PC-3 (cell line): ENCODE measurements at regions of chr14 and their contacts with region 1.

Region 1: DNA sequence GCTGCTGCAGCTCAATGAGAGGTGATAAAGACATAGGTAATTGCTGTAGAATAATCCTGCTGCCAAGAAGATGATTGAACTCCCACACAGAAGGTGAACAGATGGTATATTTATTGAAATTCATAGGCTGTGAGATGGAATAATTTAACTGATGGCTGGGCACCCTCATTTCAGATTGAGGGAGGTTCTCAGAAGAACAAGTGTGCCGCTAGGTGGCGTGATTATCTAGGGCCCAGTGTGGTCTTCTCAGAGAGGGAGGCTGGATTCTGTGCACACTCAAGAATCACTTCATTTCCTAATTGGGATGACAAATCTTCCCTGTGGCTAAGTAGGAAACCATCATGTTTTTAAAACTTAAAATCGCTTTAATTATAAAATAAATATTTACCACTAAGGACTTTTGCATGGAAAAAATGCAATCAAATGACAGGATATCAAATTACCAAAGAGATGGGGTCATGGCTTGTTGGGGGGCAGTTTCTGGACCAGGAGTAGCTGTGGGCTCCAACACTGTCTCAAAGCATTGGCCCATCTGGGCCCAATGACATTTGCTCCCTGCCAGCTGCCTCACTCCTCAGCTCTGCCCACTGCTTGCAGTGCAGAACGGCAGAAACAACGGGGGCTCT is 132.3 kb downstream of the SNAPC1 start:
- DNase-seq: peak; percentile 90
- ATAC-seq: peak; percentile 68
- H3K4me3 ChIP-seq: no peak overlapping the region
- H3K27ac ChIP-seq: no peak overlapping the region
- H3K4me1 ChIP-seq: peaks cover 21% of the 10 kb centered on the region
- H3K27me3 ChIP-seq: no peaks in the 10 kb centered on the region
- CTCF ChIP-seq: peak; percentile 96

Region 2: DNA sequence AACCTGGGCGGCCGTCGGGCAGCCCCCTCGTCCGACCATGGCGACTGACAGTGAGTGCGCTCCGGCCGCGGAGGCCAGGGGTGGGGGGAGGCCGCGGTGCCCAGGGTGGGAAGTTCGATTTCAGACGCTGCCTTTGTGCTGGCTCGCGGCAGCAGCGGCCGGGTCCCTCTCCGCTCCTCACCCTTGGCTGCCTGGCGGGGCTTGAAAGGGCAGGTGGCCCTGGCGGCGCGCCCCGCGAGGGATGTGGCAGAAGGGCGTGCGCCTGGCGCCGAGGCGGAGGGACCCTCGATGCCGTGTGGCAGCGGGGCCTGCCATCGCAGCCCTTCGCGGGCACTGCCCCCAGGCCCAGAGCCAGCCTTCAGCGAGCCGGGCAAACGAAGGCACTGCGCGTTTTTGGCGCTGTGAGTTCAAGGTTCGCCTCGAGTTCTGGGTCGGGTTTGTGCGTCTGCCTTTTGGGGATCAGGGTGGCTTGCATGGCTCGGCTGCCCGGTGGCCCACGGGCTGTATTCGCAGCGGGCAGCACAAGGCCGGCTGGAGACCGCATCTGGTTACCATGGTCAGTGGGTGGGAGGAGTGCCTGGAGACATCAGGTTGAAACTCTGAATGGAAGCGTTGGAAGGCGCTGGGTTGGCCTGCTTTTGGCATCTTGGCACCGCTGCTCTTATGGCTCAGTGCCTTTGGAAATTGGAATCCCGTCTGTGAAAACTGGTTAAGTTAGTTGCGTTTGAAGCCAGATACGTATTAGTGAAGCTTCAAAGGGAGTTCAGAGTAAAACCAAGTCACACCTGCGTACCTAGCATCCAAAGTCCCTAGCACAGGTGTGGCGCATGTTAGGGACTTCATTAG is 81.6 kb before region 1 on chr14:
- CTCF ChIA-PET with region 1: no interaction called
- POLR2A ChIA-PET with region 1: no interaction called
- intact Hi-C with region 1: no loop called
- DNase-seq: no peak
- ATAC-seq: peak; percentile 58
- H3K4me3 ChIP-seq: peak overlapping the region; percentile 62
- H3K27ac ChIP-seq: no peak overlapping the region
- H3K4me1 ChIP-seq: peaks cover 4% of the 10 kb centered on the region; the same call in 1 of the 2 replicates
- H3K27me3 ChIP-seq: peaks cover 39% of the 10 kb centered on the region
- CTCF ChIP-seq: no peak

Region 3: GRCh38 chr14:62029569-62029924 is 135.0 kb after region 1 on chr14:
- CTCF ChIA-PET with region 1: no interaction called
- POLR2A ChIA-PET with region 1: no interaction called
- intact Hi-C with region 1: no loop called
- DNase-seq: no peak
- ATAC-seq: no peak
- H3K4me3 ChIP-seq: no peak overlapping the region
- H3K27ac ChIP-seq: no peak overlapping the region
- H3K4me1 ChIP-seq: peaks cover 38% of the 10 kb centered on the region
- H3K27me3 ChIP-seq: no peaks in the 10 kb centered on the region
- CTCF ChIP-seq: no peak

Region 4: GRCh38 chr14:62126879-62127478 is 232.4 kb after region 1 on chr14:
- CTCF ChIA-PET with region 1: interaction called, 3 read pairs
- POLR2A ChIA-PET with region 1: no interaction called
- intact Hi-C with region 1: loop called (anchors 1 kb)
- DNase-seq: peak; percentile 85
- ATAC-seq: peak; percentile 88
- H3K4me3 ChIP-seq: no peak overlapping the region
- H3K27ac ChIP-seq: peak overlapping the region; percentile 15; the same call in 1 of the 2 replicates
- H3K4me1 ChIP-seq: peaks cover 5% of the 10 kb centered on the region; the same call in 1 of the 2 replicates
- H3K27me3 ChIP-seq: no peaks in the 10 kb centered on the region
- CTCF ChIP-seq: peak; percentile 94

Region 5: DNA sequence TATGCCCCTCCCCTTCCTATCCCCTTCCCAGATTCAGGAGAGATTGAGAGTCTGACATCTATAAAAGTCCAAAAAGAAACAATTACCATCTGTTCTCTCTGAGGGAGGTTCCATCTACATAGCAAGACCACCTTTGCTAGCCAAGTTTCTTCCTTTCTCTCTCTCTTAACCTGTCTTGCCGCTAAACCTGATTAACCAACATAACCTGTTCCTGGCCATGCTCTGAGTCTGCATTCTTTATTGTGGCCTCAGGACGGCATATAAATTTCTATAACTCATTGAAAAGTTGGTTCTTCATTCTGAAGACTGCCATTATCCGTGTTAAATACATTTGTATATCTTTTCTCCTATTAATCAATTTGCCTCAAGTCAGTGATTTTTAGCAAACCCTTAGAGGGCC is 556.7 kb after region 1 on chr14:
- CTCF ChIA-PET with region 1: no interaction called
- POLR2A ChIA-PET with region 1: no interaction called
- intact Hi-C with region 1: loop called (anchors 10 kb)
- DNase-seq: no peak
- ATAC-seq: no peak
- H3K4me3 ChIP-seq: no peak overlapping the region
- H3K27ac ChIP-seq: no peak overlapping the region
- H3K4me1 ChIP-seq: no peaks in the 10 kb centered on the region
- H3K27me3 ChIP-seq: peaks cover 29% of the 10 kb centered on the region
- CTCF ChIP-seq: no peak